SK-N-SH (cell line): ENCODE measurements at regions of chr2 and their contacts with region 1.

Region 1: DNA sequence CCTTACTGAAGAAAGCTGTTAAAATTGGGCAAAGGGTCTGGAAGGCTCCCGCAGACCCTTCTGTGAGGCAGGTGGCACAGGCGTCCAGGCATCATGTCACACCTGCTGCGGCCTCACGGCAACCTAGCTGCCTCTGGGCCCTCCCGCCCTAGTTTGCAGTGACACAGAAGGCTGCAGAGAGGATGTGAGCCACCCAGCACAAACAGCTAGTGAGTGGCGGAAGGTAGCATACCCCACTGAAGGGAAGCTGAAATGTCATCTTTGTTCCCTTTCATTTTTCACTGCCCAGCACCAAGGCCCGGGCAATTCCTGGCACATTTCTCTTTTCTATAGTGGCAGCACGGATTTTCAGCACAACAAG is 53.8 kb downstream of the TRAPPC12 start:
- DNase-seq: no peak
- H3K4me3 ChIP-seq: no peak overlapping the region
- H3K27ac ChIP-seq: peak overlapping the region in 1 of 2 experiments; percentile 58; a peak in 2 of 4 replicates
- H3K4me1 ChIP-seq: peaks cover 5 to 28% of the 10 kb centered on the region in 2 experiments; a peak in 2 of 4 replicates
- H3K27me3 ChIP-seq: no peaks in the 10 kb centered on the region
- CTCF ChIP-seq: no peak
- EP300 ChIP-seq: no peak
- RAD21 ChIP-seq: no peak

Region 2: DNA sequence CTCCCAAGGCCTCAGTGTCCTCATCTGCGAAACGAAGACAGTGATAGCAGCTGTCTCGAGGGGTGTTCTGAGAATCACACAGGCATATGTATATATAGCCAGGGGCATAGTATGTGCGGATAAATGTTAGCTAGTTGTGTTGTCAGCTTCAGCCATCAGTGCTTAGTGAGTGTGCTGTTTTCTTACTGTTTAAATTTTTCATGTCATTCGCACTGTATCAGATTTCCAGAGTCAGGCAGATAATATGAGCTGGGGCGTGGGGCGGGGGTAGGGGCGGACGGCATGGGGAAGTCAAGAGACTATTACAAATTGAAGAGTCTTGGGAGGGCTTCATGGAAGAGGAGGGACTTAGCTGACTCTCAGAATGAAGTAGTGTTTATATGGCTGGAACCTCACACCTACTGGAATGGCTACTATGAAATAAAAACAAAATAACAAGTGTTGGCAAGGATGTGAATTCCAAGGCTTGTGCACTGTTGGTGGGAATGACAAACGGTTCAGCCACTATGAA is 46.8 kb before region 1 on chr2:
- CTCF ChIA-PET with region 1: no interaction called
- POLR2A ChIA-PET with region 1: no interaction called
- DNase-seq: no peak
- H3K4me3 ChIP-seq: no peak overlapping the region
- H3K27ac ChIP-seq: peak overlapping the region in 1 of 2 experiments; percentile 50; a peak in 1 of 4 replicates
- H3K4me1 ChIP-seq: peaks cover 0 to 5% of the 10 kb centered on the region in 2 experiments; a peak in 2 of 4 replicates
- H3K27me3 ChIP-seq: no peaks in the 10 kb centered on the region
- CTCF ChIP-seq: no peak
- EP300 ChIP-seq: no peak
- RAD21 ChIP-seq: no peak

Region 3: DNA sequence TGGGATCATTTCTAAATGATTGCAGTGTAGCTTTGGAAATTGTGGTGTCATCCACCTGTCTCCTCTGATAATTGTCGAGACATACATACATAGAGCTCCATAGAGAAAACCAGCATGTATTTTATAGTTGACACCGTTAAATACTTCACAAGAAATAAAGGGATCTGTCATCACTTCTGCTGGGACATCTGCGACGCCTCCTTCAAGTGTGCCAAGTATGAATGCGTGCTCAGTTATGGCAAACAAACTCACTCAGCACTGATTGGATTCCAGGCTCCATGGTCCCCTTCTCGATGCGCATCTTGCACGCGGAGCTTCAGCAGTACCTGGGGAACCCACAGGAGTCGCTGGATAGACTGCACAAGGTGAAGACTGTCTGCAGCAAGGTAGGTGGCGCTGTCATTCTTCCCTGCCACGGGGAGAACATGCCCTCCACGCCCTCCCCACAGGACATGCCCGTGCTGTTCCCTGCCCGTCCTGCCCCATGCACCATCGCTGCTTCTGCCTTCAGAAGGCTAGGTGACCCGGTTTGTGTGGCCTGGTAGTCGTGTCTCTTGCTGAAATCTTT is 10.3 kb after region 1 on chr2:
- CTCF ChIA-PET with region 1: interaction called, 13 read pairs
- POLR2A ChIA-PET with region 1: interaction called, 4 read pairs
- DNase-seq: no peak
- H3K4me3 ChIP-seq: no peak overlapping the region
- H3K27ac ChIP-seq: no peak overlapping the region; a peak in 1 of 4 replicates
- H3K4me1 ChIP-seq: peaks cover 0 to 15% of the 10 kb centered on the region in 2 experiments; a peak in 2 of 4 replicates
- H3K27me3 ChIP-seq: no peaks in the 10 kb centered on the region
- CTCF ChIP-seq: peak; percentile 7; the same call in 1 of the 2 replicates
- EP300 ChIP-seq: no peak
- RAD21 ChIP-seq: no peak

Region 4: DNA sequence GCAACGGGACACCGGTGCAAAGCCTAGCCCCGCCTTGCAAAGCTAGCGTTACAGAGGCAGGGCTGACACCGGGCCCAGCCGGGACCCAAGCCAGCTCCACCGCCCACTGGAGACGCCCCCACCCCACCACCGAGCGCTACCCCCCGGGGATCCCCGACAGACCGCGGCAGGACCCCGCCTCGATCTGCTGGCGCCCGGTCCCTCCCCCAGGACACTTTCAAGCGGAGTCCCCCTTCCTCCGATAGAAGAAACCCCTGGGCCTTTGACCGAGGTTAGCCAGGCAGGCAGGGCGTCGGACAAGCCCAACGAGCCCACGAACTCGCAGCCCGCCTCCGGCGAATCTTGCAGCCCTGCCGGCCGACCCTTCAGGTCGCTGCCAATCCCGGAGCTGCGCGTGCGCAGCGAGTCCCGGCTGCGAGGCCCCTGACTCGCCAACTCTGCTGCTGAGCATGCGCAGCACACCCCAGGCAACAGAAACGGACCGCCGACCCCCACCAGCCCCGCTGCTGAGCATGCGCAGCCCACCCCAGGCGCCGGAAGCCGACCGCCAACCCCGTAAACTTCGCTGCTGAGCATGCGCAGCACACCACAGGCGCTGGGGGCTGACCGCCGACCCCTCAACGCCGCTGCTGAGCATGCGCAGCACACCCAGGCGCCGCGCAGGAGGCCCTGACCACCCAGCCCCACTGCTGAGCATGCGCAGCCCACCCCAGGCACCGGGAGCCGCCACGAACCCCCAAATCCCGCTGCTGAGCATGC is 85.4 kb after region 1 on chr2:
- CTCF ChIA-PET with region 1: no interaction called
- POLR2A ChIA-PET with region 1: no interaction called
- DNase-seq: peak; percentile 100
- H3K4me3 ChIP-seq: peak overlapping the region; percentile 80 to 82
- H3K27ac ChIP-seq: peak overlapping the region; percentile 89 to 96
- H3K4me1 ChIP-seq: peaks cover 16 to 29% of the 10 kb centered on the region in 2 experiments
- H3K27me3 ChIP-seq: no peaks in the 10 kb centered on the region
- CTCF ChIP-seq: no peak
- EP300 ChIP-seq: no peak
- RAD21 ChIP-seq: no peak

Region 5: DNA sequence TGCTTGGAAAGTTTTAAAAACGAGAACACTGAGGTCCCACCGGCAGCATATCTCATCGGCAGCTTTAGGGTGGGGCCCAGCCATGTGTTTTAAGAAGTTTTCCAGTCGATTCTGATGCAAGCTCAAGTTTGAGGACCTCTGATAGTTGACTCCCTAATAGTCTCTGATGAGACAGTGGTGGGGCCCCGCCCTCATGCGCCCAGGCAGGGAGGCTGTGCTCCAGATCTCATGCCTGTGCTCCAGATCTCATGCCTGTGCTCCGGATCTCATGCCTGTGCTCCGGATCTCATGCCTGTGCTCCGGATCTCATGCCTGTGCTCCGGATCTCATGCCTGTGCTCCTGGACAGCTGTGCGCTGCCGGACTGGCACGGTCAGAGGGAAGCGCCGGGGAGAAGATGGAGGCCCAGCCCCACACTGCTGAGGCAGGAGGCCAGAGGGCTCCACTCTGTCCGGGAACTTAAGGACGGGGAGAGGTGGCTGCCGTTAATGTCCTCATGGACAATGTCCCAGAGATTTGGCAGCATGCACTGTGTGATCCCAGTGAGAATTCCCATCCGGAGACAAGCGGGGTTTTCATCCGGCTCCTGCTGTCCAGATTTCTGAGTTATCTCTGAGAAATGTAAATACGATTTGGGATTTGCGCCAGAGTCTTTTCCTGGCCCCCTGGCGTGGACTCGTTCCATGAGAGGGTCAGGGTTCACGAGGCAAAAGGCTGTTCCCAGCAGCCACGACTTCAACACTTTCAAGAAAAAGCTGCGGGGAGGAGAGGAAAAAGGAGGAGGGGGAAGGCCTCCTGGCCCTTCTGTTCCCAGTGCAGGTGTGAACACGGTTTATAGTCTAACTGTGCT is 152.2 kb after region 1 on chr2:
- CTCF ChIA-PET with region 1: no interaction called
- POLR2A ChIA-PET with region 1: no interaction called
- DNase-seq: peak; percentile 82
- H3K4me3 ChIP-seq: no peak overlapping the region; a peak in 1 of 4 replicates
- H3K27ac ChIP-seq: peak overlapping the region; percentile 71 to 97
- H3K4me1 ChIP-seq: peaks cover 13 to 59% of the 10 kb centered on the region in 2 experiments
- H3K27me3 ChIP-seq: no peaks in the 10 kb centered on the region
- CTCF ChIP-seq: no peak
- EP300 ChIP-seq: peak in 1 of 2 experiments; percentile 57; a peak in 2 of 4 replicates
- RAD21 ChIP-seq: peak; percentile 19; the same call in 1 of the 2 replicates